Heart left ventricle (tissue), 16 donors: ENCODE measurements at regions of chr10 and their contacts with region 1.

Region 1: DNA sequence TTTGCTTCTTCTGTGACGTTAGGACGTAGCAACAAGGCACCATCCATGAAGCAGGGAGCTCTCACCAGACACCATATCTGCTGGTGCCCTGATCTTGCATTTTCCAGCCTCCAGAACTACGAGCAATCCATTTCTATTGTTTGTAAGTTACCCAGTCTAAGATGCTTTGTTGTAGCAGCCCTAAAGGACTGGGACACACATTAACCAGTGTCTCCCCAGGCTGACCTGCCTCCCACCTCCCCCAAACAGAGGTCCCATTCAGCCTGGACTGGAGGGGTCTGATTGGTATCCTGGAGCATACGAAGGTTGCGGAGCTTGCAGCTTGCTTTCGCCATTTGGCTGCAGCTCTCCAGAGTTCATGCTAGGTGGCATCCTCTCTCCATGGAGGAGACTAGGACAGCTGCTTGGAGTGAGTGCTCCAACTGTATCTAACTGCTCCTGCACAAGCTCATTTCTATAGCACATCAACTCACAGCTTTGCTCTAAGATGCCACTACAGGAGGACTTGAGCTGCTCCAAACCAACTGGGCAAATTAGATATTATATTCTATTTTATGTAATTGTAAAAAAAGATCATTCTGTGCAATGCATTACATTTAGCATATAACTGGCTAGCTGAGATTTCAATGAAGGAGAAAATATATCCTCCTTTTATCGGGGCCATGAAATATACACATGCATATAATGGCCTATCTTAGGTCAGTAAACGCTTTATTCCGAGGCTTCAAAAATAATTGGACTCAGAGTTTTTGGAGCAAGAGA is 8.0 kb upstream of the GRK5 start:
- DNase-seq: peak in 4 of 5 donors; percentile 68 to 76 (median 72)
- ATAC-seq: peak; percentile 82 to 98 (median 97)
- H3K4me3 ChIP-seq: no peak overlapping the region
- H3K27ac ChIP-seq: no peak overlapping the region
- H3K4me1 ChIP-seq: peaks cover 0 to 9% (median 1%) of the 10 kb centered on the region in 12 donors
- H3K27me3 ChIP-seq: no peaks in the 10 kb centered on the region
- CTCF ChIP-seq: peak; percentile 63 to 92 (median 84)
- POLR2A ChIP-seq: no peak

Region 2: GRCh38 chr10:119445311-119445934 is 246.0 kb after region 1 on chr10:
- intact Hi-C with region 1: loop called (anchors 1 to 2 kb)
- DNase-seq: peak; percentile 87 to 91 (median 90)
- ATAC-seq: peak; percentile 55 to 68 (median 66)
- H3K4me3 ChIP-seq: no peak overlapping the region
- H3K27ac ChIP-seq: peak overlapping the region in 7 of 12 donors; percentile 0 to 71 (median 35)
- H3K4me1 ChIP-seq: peaks cover 0 to 42% (median 18%) of the 10 kb centered on the region in 12 donors
- H3K27me3 ChIP-seq: no peaks in the 10 kb centered on the region
- CTCF ChIP-seq: peak; percentile 89 to 99 (median 97)
- POLR2A ChIP-seq: no peak

Region 3: DNA sequence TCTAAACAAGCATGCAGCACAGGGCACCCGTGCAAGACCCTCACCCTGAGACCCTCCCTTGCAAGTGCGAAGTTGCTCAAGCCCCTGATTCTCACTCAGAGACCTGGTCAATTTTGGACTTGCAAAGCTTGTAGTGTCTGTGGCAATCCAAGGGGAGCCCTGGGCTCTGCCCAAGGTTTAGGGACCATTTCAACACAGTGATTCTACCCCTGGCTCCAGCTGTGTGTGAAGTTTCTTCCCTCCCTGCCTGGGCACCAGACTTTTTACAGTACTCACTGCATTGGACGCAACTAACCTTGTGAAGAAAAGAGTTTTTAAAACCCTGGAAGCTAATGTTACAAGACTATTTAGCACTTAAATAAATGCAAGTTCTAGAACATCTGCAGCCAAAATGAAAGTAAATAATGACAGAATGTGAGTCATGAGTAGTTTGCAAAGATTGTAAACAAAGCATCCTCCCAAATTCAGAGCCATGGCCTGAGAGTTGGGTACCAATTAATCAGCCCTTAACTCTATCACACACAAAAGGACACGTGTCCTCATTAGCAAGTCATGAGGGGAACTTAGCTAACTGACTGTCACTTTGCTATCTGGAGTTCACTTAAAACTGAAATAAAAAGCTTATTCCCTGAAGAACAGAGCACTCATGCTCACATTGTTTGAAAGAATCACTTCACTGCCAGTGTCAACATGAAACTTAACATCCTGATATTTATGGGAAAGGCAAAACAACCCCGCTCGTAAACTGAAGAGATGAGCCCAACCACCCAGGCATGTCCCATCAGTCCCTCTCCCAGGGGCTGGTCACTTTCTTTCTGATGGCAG is 295.0 kb after region 1 on chr10:
- intact Hi-C with region 1: loop called in 6 of 10 experiments (anchors 1 to 5 kb)
- DNase-seq: no peak
- ATAC-seq: no peak
- H3K4me3 ChIP-seq: no peak overlapping the region
- H3K27ac ChIP-seq: peak overlapping the region in 2 of 12 donors; percentile 2 to 44
- H3K4me1 ChIP-seq: peaks cover 0 to 20% (median 5%) of the 10 kb centered on the region in 12 donors
- H3K27me3 ChIP-seq: no peaks in the 10 kb centered on the region
- CTCF ChIP-seq: no peak
- POLR2A ChIP-seq: no peak

Region 4: GRCh38 chr10:119542988-119543813 is 343.8 kb after region 1 on chr10:
- intact Hi-C with region 1: loop called in 5 of 10 experiments (anchors 5 to 10 kb)
- DNase-seq: peak; percentile 51 to 77 (median 54)
- ATAC-seq: peak; percentile 50 to 73 (median 70)
- H3K4me3 ChIP-seq: peak overlapping the region; percentile 50 to 91 (median 64)
- H3K27ac ChIP-seq: peak overlapping the region in 10 of 12 donors; percentile 31 to 92 (median 58)
- H3K4me1 ChIP-seq: peaks cover 0 to 43% (median 11%) of the 10 kb centered on the region in 12 donors
- H3K27me3 ChIP-seq: peaks cover 0 to 28% (median 7%) of the 10 kb centered on the region in 9 donors
- CTCF ChIP-seq: peak; percentile 21 to 67 (median 49)
- POLR2A ChIP-seq: no peak

Region 5: GRCh38 chr10:119602241-119603095 is 403.1 kb after region 1 on chr10:
- intact Hi-C with region 1: loop called in 2 of 10 experiments (anchors 5 to 10 kb)
- DNase-seq: no peak
- ATAC-seq: peak in 2 of 4 donors; percentile 49 to 58
- H3K4me3 ChIP-seq: no peak overlapping the region
- H3K27ac ChIP-seq: no peak overlapping the region
- H3K4me1 ChIP-seq: peaks cover 0 to 6% (median 3%) of the 10 kb centered on the region in 12 donors
- H3K27me3 ChIP-seq: no peaks in the 10 kb centered on the region
- CTCF ChIP-seq: peak in 8 of 12 donors; percentile 6 to 47 (median 34)
- POLR2A ChIP-seq: no peak